Activated CD8-positive, alpha-beta memory T cell treated with anti-CD3 and anti-CD28 coated beads, Interleukin-2, amount 10 ng/mL, durations not matched to agents 7 days and 5 days (primary cell): ENCODE measurements at regions of chr11 and their contacts with region 1.

Region 1: DNA sequence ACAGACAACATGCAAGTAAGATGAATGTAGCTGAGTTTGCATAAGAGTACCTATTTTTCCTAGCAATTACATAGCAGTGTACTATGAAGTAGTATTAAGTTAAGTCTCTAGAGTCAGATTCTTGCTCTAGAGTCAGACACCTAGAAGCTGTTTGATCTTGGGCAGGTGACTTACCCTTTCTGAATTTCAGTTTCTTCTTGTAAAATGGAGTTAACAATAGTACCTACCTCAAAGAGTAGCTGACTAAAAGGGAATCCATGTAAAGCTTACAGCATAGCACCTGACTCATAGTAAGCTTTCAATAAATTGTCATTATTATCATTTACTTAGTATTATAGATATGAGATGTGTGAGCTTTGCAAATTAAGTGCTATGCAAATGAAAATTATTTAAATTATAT is 47.8 kb upstream of the PTPRJ start:
- DNase-seq: no peak
- ATAC-seq: no peak
- H3K4me3 Mint-ChIP-seq: no peak overlapping the region
- H3K27ac Mint-ChIP-seq: no peak overlapping the region
- H3K4me1 Mint-ChIP-seq: peaks cover 14% of the 10 kb centered on the region
- H3K27me3 Mint-ChIP-seq: no peaks in the 10 kb centered on the region

Region 2: DNA sequence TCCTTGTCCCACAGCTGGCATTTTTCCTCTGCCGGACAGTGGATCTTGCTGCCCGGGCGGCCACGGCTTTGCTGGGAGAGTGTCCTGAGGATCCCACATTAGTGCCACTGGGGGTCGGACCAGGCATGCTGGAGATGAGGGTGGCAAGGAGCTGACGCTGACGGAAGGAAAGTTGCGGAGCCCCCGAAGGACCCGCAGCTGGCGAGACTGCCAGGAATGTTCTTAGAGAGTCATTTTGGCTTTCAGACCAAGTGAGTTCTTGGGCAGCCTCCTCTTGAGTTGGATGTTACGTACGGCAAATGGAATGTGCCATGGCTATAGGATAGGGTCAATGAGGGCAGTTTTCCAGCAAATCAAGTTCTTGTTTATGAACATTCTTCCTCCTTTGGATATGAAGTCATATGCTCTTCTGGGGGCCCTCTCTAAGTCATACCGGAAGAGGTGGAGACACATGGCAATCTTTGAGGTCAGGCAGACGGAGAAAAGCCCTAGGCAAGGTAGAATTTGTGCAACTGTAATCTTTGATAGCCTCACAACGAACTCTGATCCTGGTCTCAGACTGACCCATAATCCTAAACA is 27.0 kb before region 1 on chr11:
- CTCF ChIA-PET with region 1: no interaction called
- DNase-seq: no peak
- ATAC-seq: no peak
- H3K4me3 Mint-ChIP-seq: no peak overlapping the region
- H3K27ac Mint-ChIP-seq: no peak overlapping the region
- H3K4me1 Mint-ChIP-seq: peaks cover 8% of the 10 kb centered on the region
- H3K27me3 Mint-ChIP-seq: no peaks in the 10 kb centered on the region

Region 3: DNA sequence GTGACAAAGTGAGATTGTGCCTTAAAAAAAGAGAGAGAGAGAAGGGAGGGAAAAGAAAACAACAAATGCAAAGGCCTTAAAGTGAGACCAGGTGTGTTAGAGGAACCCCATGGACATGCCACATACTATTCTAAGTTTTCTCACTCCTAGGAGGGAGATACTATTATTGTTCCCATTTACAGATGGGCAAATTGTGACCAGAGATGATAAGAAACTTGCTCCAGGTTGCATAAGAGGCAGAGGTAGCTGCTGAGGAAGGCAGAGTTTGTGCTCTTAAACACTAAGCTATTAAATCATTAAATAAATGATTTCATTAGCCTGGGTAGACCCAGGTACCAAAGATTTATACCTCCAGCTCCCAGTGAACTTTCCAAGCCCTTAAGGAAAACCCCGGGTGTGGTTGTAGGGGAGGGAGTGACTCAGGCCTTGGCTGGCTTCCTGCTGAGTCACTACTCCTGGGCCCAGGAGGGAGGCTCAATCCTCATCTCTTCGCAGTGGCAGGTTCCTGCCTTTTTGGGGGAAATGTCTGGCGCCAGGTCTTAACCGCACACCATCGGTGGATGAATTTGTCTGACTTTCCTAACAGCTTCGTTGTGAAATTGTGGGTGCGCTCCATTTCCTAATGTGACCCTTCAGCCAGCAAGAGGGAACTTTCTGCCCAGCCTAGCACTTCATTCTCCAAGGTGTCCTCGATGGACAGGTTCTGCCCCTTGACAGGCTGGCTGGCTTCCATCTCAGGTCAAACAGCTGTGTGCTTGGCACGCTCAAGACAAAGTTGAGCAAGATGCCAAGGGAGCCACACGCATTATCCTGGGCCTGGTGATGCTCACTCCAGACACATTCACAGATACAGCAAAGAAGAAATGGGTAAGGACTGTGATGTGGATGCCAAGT is 14.4 kb after region 1 on chr11:
- CTCF ChIA-PET with region 1: interaction called, 21 read pairs
- DNase-seq: peak; percentile 45
- ATAC-seq: no peak
- H3K4me3 Mint-ChIP-seq: no peak overlapping the region
- H3K27ac Mint-ChIP-seq: peak overlapping the region; percentile 33
- H3K4me1 Mint-ChIP-seq: peaks cover 44% of the 10 kb centered on the region
- H3K27me3 Mint-ChIP-seq: no peaks in the 10 kb centered on the region

Region 4: DNA sequence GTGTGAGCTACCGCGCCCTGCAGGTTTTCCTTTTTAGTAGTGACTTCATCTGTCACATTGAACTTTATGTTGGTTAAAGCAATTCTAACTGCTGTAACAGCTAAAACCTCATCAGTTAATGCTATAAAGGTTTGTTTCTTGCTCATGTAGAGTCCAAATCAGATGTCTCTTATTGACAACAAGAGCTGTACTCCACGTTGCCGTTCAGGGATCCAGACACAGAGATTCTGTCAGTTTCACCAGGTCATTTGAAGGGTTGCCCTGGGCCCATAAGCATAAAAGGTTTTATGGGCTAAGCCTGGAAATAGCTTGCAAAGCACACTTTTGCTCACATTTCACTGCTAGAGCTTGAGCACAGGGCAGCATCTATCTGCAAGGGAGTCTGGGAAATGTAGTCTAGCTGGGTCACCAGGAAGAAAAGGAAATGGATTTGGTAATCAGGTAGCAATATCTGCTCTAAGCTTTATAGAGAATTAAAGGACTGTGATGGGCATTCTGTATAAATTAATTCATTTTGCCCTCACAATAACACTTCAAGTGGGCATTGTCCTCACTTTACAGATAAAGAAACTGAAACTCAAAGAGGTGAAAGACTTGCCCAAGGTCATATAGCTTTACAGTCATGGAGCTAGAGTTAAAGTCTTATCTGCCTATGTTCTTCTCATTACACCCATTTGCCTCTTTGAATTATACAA is 22.7 kb after region 1 on chr11:
- CTCF ChIA-PET with region 1: interaction called, 15 read pairs
- DNase-seq: no peak
- ATAC-seq: no peak
- H3K4me3 Mint-ChIP-seq: no peak overlapping the region
- H3K27ac Mint-ChIP-seq: peak overlapping the region; percentile 62
- H3K4me1 Mint-ChIP-seq: peaks cover 24% of the 10 kb centered on the region
- H3K27me3 Mint-ChIP-seq: no peaks in the 10 kb centered on the region

Region 5: DNA sequence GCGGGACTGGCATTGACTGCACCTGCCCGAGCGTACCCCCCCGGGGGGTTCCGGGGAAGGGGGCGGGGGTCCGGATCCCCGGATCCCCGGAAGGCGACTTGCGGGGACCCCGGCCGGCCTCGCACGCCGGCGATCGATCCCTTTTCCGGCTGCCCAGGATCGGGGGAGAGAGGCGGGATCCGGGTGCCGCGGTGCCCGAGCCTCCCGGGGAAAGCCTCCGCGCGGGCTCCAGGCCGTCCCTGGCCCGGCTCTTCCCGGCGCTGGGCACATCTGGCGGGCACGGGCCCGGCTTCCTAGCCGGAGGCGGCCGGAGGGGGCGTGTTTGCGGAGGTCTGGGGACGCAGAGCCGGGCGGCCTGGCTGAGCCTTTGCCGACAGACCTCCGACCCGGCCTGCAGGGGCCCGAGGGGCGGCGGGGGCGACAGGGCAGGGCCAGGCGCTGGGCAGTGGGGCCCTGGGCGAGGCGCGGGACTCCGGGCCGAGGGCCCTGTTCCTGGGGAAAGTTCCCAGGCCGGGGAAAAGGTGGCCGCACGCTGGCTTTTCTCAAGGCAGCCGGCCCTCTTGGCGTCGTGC is 48.6 kb after region 1 on chr11:
- CTCF ChIA-PET with region 1: interaction called, 14 read pairs
- DNase-seq: peak; percentile 55
- ATAC-seq: peak; percentile 57
- H3K4me3 Mint-ChIP-seq: peak overlapping the region; percentile 97
- H3K27ac Mint-ChIP-seq: peak overlapping the region; percentile 92
- H3K4me1 Mint-ChIP-seq: peaks cover 34% of the 10 kb centered on the region
- H3K27me3 Mint-ChIP-seq: peaks cover 8% of the 10 kb centered on the region

Region 6: GRCh38 chr11:48001438-48002021 is 69.0 kb after region 1 on chr11:
- CTCF ChIA-PET with region 1: interaction called, 19 read pairs
- DNase-seq: peak; percentile 96
- ATAC-seq: peak; percentile 88
- H3K4me3 Mint-ChIP-seq: peak overlapping the region; percentile 59
- H3K27ac Mint-ChIP-seq: peak overlapping the region; percentile 98
- H3K4me1 Mint-ChIP-seq: peaks cover 88% of the 10 kb centered on the region
- H3K27me3 Mint-ChIP-seq: no peaks in the 10 kb centered on the region

Region 7: DNA sequence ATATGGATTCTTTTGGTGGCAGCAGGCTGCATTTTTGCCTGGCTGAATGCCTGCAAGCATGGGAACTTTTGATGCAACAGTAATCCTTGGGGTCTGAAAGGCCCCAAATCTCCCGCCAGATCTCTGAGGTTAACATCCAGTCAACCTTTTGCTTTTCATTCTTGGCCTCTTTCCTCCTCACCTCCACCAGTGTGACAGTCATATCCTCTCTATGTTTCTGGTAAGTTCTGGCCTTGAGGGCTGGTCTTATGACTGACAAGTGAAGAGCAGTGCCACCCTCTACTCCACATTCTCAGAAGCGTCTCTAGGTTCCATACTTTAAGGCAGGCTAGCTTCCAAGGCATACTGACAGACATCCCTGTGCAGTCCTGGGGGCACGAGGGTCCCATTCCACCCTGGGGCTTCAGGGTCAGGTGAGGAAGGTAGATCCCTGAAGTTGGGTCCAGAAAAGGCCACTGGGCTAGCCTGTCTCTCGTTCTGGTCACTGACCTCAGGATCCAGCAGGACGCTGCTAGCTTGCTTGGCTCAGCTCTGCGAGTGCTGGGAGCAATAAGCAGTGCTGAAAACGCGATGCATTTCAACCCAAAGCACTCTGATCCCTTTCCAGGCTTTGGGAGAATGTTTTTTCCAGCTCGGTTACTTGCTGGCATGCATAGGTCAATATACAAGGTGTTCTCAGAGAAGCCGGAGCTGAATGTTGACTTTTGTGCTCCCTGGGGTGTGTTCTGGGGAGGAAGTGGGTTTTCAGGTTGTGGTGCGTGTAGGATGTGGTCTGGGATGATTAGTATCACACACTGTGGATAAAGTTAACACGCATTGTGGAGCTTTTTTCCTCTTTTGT is 123.0 kb after region 1 on chr11:
- CTCF ChIA-PET with region 1: interaction called, 23 read pairs
- DNase-seq: peak; percentile 93
- ATAC-seq: peak; percentile 92
- H3K4me3 Mint-ChIP-seq: peak overlapping the region; percentile 65
- H3K27ac Mint-ChIP-seq: peak overlapping the region; percentile 94
- H3K4me1 Mint-ChIP-seq: peaks cover 83% of the 10 kb centered on the region
- H3K27me3 Mint-ChIP-seq: no peaks in the 10 kb centered on the region

Region 8: DNA sequence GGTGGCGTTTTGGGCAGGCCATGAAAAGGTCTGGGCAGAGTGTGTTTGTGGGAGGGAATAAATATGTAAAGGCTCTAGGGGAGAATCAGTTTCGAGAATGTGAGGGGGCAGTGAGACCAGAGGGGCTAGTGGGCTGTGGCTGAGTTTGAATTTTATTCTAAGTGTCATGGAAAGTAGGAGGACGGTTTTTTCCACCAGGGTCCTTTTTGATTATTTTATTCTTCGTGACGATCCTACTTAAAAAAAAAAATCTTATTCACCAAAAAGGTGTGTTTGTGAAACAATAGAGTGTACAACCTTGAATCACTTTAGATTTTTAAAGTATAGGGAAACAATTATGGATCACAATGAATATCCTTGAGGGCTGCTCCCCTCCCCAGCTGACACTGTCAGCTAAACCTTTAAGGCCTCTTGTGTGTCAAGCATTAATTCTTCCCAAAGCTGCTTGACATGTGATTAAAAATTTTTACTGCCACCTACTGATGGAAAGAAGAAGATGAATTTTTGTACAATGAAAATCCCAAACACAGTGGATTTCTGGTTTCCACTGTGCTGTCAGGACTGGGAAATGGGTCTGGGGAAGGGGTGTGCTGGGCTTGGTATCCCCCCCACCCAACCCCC is 176.6 kb after region 1 on chr11:
- CTCF ChIA-PET with region 1: interaction called, 226 read pairs
- DNase-seq: no peak
- ATAC-seq: peak; percentile 22
- H3K4me3 Mint-ChIP-seq: peak overlapping the region; percentile 69
- H3K27ac Mint-ChIP-seq: peak overlapping the region; percentile 92
- H3K4me1 Mint-ChIP-seq: peaks cover 47% of the 10 kb centered on the region
- H3K27me3 Mint-ChIP-seq: no peaks in the 10 kb centered on the region